ENCODE measurements at regions of chrX and their contacts with region 1.

Region 1: DNA sequence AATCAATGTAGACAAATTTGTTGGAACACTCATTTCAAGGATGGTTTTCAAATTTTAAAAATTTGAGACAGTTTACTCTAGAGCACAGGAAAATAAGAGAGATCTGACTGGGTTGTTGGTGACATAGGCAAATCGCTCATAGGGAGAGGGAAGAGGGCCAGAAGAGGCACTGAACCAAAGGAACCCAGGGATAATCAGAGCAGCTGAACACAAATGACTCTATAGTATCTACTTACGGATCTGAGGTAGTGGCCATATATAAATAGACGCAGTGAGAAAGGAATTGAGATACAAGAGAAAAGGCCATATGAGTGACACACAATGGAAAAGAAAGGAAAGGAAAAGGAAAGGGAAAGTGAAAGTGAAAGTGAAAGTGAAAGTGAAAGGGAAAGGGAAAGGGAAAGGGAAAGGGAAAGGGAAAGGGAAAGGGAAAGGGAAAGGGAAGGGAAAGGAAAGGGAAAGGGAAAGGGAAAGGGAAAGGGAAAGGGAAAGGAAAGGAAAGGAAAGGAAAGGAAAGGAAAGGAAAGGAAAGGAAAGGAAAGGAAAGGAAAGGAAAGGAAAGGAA is 759.3 kb downstream of the DMD start:
- DNase-seq: no peak
- ATAC-seq: no peak
- H3K4me3 ChIP-seq: no peak overlapping the region
- H3K27ac ChIP-seq: no peak overlapping the region
- H3K4me1 ChIP-seq: no peaks in the 10 kb centered on the region
- H3K27me3 ChIP-seq: no peaks in the 10 kb centered on the region
- CTCF ChIP-seq: no peak
- EP300 ChIP-seq: no peak
- POLR2A ChIP-seq: no peak
- RAD21 ChIP-seq: no peak

Region 2: GRCh38 chrX:32185160-32185559 is 266.9 kb before region 1 on chrX:
- CTCF ChIA-PET with region 1: no interaction called
- POLR2A ChIA-PET with region 1: no interaction called
- in situ Hi-C with region 1: no loop called
- intact Hi-C with region 1: no loop called
- DNase-seq: no peak
- ATAC-seq: no peak
- H3K4me3 ChIP-seq: no peak overlapping the region
- H3K27ac ChIP-seq: no peak overlapping the region
- H3K4me1 ChIP-seq: no peaks in the 10 kb centered on the region
- H3K27me3 ChIP-seq: no peaks in the 10 kb centered on the region
- CTCF ChIP-seq: no peak
- EP300 ChIP-seq: no peak
- POLR2A ChIP-seq: no peak
- RAD21 ChIP-seq: no peak

Region 3: DNA sequence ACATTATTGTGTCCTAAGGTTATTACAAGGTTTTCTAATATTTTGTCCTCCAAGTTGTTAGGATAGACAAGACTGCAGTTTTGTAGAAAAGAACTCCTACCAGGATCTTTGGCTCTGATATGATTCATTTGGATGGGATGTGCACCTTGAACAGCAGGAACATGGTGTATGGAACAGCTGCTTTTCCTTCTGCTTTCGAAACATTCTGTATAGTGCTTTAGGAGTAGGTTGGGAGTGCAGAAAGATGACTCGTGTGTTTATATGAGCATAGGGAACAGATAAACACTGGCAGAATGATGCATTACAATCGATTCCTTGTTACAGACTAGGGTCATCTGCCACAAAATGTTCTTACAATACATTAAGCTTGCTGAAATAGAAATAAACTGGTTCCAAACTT is 30.8 kb before region 1 on chrX:
- CTCF ChIA-PET with region 1: no interaction called
- POLR2A ChIA-PET with region 1: no interaction called
- in situ Hi-C with region 1: no loop called
- intact Hi-C with region 1: loop called (anchors 1 kb)
- DNase-seq: no peak
- ATAC-seq: no peak
- H3K4me3 ChIP-seq: no peak overlapping the region
- H3K27ac ChIP-seq: no peak overlapping the region
- H3K4me1 ChIP-seq: no peaks in the 10 kb centered on the region
- H3K27me3 ChIP-seq: no peaks in the 10 kb centered on the region
- CTCF ChIP-seq: no peak
- EP300 ChIP-seq: no peak
- POLR2A ChIP-seq: no peak
- RAD21 ChIP-seq: no peak